ENCODE measurements at regions of chr6 and their contacts with region 1.

Region 1: DNA sequence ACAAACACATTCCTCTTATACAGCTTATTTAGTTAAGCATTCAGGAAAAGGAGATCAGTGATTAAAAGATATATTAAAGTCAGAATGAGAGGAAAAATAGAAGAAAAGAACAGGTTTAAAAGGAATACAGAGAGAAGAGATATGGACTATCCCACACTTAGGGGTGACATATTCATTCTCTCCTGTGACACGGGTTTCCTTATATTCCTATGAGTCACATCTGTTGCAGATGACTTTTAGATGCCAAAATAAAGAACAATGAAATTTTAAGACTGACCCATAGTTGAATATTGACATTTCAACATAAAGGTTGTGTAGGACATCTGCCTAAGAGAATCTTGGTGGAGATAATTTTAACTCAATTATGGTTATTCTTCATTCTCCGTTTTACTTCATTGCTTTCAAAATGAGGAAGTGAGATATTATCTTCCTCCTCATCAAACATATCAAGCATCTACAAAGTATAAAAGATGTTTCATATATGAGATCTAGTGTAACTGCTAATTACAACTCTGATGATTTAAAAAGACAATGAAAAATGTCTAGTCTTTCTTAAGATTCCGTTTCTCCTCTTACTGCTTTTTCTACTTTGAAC is 1336.7 kb upstream of the CITED2 start:
- DNase-seq: no peak
- ATAC-seq: no peak
- H3K4me3 ChIP-seq: no peak overlapping the region
- H3K27ac ChIP-seq: no peak overlapping the region
- H3K4me1 ChIP-seq: no peaks in the 10 kb centered on the region
- H3K27me3 ChIP-seq: no peaks in the 10 kb centered on the region
- CTCF ChIP-seq: no peak

Region 2: GRCh38 chr6:140366989-140367388 is 344.1 kb before region 1 on chr6:
- CTCF ChIA-PET with region 1: no interaction called
- POLR2A ChIA-PET with region 1: no interaction called
- in situ Hi-C with region 1: no loop called
- intact Hi-C with region 1: no loop called
- DNase-seq: no peak
- ATAC-seq: peak; percentile 81
- H3K4me3 ChIP-seq: no peak overlapping the region
- H3K27ac ChIP-seq: no peak overlapping the region
- H3K4me1 ChIP-seq: no peaks in the 10 kb centered on the region
- H3K27me3 ChIP-seq: no peaks in the 10 kb centered on the region
- CTCF ChIP-seq: no peak

Region 3: GRCh38 chr6:140602431-140603248 is 108.5 kb before region 1 on chr6:
- CTCF ChIA-PET with region 1: no interaction called
- POLR2A ChIA-PET with region 1: interaction called, 12 read pairs
- in situ Hi-C with region 1: no loop called
- intact Hi-C with region 1: no loop called
- DNase-seq: no peak
- ATAC-seq: no peak
- H3K4me3 ChIP-seq: no peak overlapping the region
- H3K27ac ChIP-seq: no peak overlapping the region; the same call in 1 of the 2 replicates
- H3K4me1 ChIP-seq: no peaks in the 10 kb centered on the region
- H3K27me3 ChIP-seq: no peaks in the 10 kb centered on the region
- CTCF ChIP-seq: no peak

Measured in Panc1 (cell line).